ENCODE measurements at regions of chr11 and their contacts with region 1.

Region 1: DNA sequence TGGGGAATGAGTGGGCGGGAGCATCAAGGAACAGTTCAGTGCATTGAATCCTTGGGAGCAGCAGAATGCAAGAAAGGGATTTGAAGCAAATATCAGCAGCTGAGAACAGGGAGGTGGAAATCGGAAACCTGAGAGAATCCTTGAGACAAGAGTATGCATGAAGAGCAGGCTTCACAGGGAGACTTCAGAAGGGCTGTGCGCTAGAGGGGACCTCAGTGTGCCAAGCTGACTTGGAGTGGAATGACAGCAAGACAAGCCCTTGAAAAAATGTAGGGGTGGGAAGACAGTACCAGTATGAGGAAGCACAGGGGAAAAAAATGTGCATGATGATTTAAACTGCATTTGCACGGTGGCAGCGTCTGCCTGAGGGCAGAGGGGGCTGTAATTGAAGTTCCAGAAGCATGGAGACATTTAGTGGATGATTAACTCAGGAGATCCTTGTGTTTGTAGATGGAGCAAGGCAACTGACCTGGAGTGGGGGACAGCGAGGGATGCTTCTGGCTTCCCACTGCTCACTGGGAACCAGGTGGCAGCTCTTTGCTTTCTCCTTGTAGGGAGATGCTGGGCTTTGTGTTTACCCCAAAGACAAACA is 204.9 kb upstream of the PLET1 start:
- DNase-seq: no peak
- ATAC-seq: no peak
- H3K4me3 ChIP-seq: no peak overlapping the region
- H3K27ac ChIP-seq: no peak overlapping the region
- H3K4me1 ChIP-seq: no peaks in the 10 kb centered on the region
- H3K27me3 ChIP-seq: peaks cover 0 to 6% (median 0%) of the 10 kb centered on the region in 9 donors
- CTCF ChIP-seq: no peak
- POLR2A ChIP-seq: no peak

Region 2: DNA sequence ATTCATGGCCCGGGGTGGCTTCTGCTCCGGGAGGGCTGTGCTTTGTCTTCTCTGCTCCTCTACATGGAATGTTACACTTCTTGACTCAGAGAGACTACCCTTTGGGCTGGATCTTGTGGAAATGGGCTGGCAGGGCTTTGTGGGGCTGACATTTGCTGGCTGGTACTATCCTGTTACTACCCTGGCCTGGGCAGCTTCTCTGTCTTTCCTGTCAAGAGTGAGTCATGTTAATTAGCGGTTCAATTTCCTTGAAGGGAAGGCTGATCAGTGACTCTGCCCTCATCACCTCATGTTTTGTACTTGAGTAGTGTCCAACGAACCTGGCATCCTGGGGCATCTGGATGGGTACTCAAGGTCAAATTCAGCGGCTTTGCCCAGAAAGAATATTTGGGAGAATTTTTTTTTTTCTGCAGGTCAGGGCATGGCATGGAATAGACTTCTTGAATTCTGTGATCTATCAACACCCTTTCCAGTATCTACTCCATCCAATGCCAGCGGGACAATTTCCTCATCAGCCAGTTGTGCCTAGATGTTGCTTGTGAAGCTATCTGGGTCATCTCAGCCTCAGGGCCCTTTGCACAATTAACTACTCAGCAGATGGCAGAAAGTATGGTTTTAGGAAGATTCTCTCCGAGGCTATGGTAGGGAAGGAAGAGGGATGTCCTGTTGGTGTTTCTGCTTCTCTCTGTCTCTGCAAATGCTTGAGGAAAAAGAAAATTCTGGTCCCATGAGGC is 64.3 kb before region 1 on chr11:
- intact Hi-C with region 1: loop called in 1 of 10 experiments (anchors 10 kb)
- DNase-seq: no peak
- ATAC-seq: no peak
- H3K4me3 ChIP-seq: no peak overlapping the region
- H3K27ac ChIP-seq: no peak overlapping the region
- H3K4me1 ChIP-seq: no peaks in the 10 kb centered on the region
- H3K27me3 ChIP-seq: no peaks in the 10 kb centered on the region
- CTCF ChIP-seq: no peak
- POLR2A ChIP-seq: no peak

Region 3: DNA sequence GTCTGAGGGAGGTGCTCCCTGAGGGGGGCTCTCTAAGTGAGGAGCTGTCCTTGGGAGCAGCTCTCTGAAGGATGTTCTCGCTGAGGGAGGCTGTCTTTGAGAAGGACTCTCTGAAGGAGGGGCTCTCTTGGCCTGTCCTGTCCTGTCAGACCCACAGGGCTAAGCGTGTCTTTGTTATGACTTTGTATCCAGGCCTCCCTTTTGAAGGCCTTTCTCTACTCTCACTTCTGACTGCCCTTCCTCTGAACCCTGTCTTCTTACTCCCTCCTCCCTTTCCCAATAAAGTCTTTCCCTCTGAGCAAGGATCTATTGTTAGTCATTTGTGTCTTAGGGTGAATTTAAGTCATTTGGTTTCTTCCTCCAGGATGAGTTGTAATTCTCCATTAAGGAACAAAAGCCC is 125.2 kb after region 1 on chr11:
- intact Hi-C with region 1: no loop called
- DNase-seq: no peak
- ATAC-seq: no peak
- H3K4me3 ChIP-seq: no peak overlapping the region
- H3K27ac ChIP-seq: peak overlapping the region in 1 of 12 donors; percentile 33
- H3K4me1 ChIP-seq: peaks cover 0 to 6% (median 1%) of the 10 kb centered on the region in 12 donors
- H3K27me3 ChIP-seq: no peaks in the 10 kb centered on the region
- CTCF ChIP-seq: no peak
- POLR2A ChIP-seq: no peak

Region 4: GRCh38 chr11:112995423-112996090 is 530.0 kb after region 1 on chr11:
- intact Hi-C with region 1: no loop called
- DNase-seq: no peak
- ATAC-seq: no peak
- H3K4me3 ChIP-seq: peak overlapping the region in 1 of 12 donors; percentile 13
- H3K27ac ChIP-seq: peak overlapping the region in 1 of 12 donors; percentile 28
- H3K4me1 ChIP-seq: peaks cover 0 to 40% (median 5%) of the 10 kb centered on the region in 12 donors
- H3K27me3 ChIP-seq: no peaks in the 10 kb centered on the region
- CTCF ChIP-seq: no peak
- POLR2A ChIP-seq: no peak

Measured in heart left ventricle (tissue), 16 donors.